ENCODE measurements at regions of chr7 and their contacts with region 1.

Region 1: DNA sequence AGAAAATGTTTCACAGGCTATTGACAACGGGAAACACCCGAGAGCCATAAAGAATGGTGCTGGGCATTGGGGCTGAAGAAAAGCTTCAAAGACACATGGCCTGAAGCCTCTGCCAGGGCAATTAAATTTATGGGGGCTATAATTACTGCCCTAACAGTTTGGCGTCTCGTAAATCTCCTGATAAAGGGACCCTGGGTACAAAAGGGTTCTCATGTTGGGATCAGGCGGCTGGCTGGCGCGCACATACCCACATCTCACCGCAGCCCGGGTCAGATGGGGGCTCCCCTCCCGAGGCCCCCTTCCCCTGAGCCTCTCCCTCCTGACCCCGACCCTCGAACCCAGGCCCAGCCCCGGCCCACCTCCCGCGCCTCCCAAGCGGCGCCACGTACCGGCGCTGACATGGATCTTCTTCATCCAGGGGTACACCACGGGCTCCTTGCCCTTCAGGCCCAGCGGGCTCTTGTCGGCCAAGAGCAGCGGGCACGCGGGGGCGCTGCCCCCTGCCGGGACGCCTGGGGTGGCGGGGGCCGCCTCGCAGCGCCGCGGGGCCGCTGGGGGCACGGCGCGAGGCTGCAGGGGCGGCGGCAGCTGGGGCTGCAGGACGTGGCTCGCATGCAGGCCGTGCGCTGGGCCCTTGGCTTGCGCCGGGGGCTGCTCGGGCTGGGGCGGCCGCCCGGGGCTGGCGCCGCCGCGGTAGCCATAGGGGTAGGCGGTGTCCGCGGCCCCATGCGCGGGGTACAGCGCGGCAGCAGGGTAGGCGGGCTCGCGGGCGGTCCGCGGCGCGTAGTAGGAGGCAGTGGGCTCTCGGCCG is 623 bp downstream of the HOXA4 start:
- DNase-seq: peak; percentile 24

Region 2: GRCh38 chr7:26853788-26854393 is 276.0 kb before region 1 on chr7:
- in situ Hi-C with region 1: loop called (anchors 10 kb)
- DNase-seq: peak; percentile 79

Region 3: DNA sequence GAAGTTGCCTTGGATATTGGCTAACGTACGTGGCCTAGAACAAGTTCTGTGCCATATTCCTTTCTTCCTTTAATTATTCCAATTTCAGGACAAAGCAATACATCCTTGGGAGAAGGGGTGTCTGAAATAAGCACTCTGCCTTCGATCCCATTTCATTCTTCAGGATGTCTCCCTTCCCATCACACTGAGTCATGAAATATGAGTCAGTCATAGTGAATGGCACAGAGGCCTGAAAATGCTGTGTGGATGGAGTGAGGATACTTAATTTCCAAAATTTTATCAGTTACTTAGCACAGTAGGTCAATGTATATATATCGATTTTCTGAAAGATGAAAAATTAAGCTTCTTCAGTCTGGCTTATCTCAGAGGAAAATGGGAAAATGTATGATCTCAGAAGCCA is 132.2 kb after region 1 on chr7:
- in situ Hi-C with region 1: no loop called
- DNase-seq: no peak

Measured in SK-MEL-5 (cell line).